Thyroid gland (tissue), 4 donors: ENCODE measurements at regions of chr20 and their contacts with region 1.

Region 1: GRCh38 chr20:9616833-9617489 is 102.6 kb downstream of the LAMP5 start:
- DNase-seq: peak; percentile 56 to 62
- H3K4me3 ChIP-seq: no peak overlapping the region
- H3K27ac ChIP-seq: no peak overlapping the region
- H3K4me1 ChIP-seq: no peaks in the 10 kb centered on the region
- H3K27me3 ChIP-seq: no peaks in the 10 kb centered on the region
- CTCF ChIP-seq: peak; percentile 63 to 86 (median 76)
- POLR2A ChIP-seq: no peak

Region 2: DNA sequence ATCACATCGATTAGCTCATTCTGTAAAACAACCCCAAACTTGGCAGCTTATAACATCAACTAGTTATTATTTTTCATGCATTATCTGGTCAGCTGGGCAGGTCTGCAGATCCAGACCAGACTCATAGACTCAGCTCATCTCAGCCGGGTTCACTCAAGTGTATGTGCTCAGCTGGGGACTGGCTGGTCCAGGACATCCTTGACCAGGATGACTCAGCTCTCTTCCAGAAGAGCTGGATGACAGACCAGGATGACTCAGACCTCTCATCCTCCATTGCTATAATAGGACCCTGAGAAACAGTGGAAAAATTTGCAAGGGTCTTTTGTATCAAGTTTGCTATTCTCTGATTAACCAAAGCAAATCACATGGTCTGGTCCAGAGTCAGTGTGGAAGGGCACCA is 860.6 kb before region 1 on chr20:
- intact Hi-C with region 1: loop called (anchors 10 kb)
- DNase-seq: peak; percentile 12 to 18
- H3K4me3 ChIP-seq: no peak overlapping the region
- H3K27ac ChIP-seq: no peak overlapping the region
- H3K4me1 ChIP-seq: peaks cover 0 to 5% of the 10 kb centered on the region in 2 donors
- H3K27me3 ChIP-seq: no peaks in the 10 kb centered on the region
- CTCF ChIP-seq: no peak
- POLR2A ChIP-seq: no peak

Region 3: DNA sequence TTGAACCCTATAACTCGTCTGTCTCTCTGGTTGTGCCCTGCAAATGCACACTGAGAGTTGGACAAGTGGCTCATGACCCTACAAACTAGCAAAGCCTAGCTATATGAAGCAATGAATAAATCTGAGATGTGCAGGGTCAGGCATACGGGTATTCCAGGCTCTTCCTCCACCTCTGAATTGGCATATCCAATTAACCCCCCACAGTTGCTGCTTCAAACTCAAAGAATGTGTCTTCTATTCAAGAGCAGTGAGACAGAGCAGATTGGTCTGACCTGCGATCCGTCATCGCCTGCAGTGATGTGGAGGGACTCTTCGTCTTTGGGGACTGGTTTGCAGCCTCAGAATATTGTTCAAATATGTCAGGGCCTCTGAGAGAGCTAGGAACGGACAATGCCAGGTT is 42.8 kb before region 1 on chr20:
- intact Hi-C with region 1: no loop called
- DNase-seq: no peak
- H3K4me3 ChIP-seq: no peak overlapping the region
- H3K27ac ChIP-seq: no peak overlapping the region
- H3K4me1 ChIP-seq: no peaks in the 10 kb centered on the region
- H3K27me3 ChIP-seq: no peaks in the 10 kb centered on the region
- CTCF ChIP-seq: no peak
- POLR2A ChIP-seq: no peak

Region 4: DNA sequence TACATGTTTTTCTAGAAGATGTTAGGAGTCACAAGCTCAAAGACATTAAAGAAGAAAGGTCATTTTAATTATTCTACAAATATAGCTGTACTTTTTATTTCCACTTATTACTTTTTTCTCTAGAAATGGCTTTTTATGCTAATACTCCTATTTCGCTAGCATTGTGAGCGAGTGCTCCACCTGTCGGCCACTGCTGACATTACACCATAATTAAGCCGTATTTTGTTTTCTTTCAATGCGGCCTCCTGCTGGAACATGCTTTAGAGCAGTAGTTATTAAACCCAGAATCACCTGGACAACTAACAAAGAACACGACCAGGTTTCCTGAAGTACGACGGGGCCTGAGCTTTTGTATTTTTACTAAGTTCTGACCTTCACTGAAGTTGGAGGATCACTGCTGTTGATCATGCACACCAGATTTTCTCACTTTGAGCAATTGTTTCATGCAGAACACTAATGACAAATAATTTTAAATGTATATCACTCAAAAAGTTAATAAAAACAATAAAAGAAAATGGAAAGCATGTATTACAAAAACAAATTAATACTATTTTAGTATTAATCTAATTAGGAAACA is 296.0 kb after region 1 on chr20:
- intact Hi-C with region 1: loop called (anchors 5 kb)
- DNase-seq: peak; percentile 41 to 58
- H3K4me3 ChIP-seq: no peak overlapping the region
- H3K27ac ChIP-seq: no peak overlapping the region
- H3K4me1 ChIP-seq: no peaks in the 10 kb centered on the region
- H3K27me3 ChIP-seq: no peaks in the 10 kb centered on the region
- CTCF ChIP-seq: peak; percentile 49 to 79 (median 68)
- POLR2A ChIP-seq: no peak